GM12878 (cell line): ENCODE measurements at regions of chr11 and their contacts with region 1.

Region 1: DNA sequence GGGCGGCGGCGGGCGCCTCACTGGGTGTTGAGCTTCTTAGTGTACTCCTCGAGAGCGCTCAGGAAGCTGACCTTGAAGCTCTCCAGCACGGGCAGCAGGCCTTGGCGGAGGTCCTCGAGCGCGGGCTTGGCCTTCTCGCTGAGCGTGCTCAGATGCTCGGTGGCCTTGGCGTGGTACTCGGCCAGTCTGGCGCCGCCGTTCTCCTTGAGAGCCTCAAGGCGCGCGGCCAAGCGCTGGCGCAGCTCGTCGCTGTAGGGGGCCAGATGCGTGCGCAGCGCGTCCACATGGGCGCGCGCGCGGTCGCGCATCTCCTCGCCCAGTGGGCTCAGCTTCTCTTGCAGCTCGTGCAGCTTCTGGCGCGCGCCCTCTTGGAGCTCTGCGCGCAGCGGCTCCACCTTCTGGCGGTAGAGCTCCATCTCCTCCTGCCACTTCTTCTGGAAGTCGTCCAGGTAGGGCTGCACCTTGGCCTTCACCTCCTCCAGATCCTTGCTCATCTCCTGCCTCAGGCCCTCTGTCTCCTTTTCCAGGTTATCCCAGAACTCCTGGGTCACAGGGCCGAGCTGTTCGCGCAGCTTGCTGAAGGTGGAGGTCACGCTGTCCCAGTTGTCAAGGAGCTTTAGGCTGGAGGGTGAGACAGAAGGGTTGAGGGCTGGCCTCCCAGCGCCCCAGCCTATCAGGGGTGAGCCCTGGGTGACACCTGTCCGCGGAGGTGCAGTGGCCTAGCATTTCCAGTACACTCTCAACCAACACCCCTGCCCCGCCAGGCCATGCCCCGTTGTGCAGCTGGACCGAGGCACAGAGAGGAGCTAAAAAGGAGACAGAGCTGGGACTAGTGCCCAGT is 1.4 kb downstream of the APOA1 start:
- DNase-seq: peak; percentile 57
- ATAC-seq: peak; percentile 94
- H3K4me3 ChIP-seq: peak overlapping the region; percentile 52; the same call in 1 of the 2 replicates
- H3K27ac ChIP-seq: peak overlapping the region; percentile 20; the same call in 1 of the 2 replicates
- H3K4me1 ChIP-seq: peaks cover 8% of the 10 kb centered on the region; the same call in 1 of the 2 replicates
- H3K27me3 ChIP-seq: no peaks in the 10 kb centered on the region
- CTCF ChIP-seq: peak; percentile 68 to 81 (median 75)
- EP300 ChIP-seq: no peak
- POLR2A ChIP-seq: peak; percentile 83
- RAD21 ChIP-seq: peak; percentile 60

Region 2: DNA sequence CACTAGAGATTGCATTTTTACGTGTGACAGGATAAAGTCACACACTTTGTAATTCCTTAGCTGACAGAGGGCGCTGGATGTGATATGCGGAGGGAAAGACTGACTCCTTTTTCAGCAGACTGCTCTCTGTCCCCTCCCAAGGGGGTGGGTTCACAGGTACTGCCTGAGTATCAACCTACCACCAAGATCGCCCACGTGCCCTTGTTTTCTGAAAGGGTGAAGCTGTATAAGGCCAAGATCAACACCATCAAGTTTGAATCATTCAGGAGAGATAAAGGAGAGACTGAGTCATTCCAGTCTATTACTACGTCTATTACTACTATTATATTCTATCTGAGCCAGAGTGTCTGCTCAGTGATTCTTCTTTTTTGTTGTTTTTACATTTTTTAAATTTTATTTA is 93.9 kb before region 1 on chr11:
- CTCF ChIA-PET with region 1: interaction called, 14 read pairs
- POLR2A ChIA-PET with region 1: no interaction called
- RAD21 ChIA-PET with region 1: interaction called, 3 read pairs
- SMC1A ChIA-PET with region 1: no interaction called
- in situ Hi-C with region 1: no loop called
- intact Hi-C with region 1: no loop called
- DNase-seq: no peak
- ATAC-seq: no peak
- H3K4me3 ChIP-seq: no peak overlapping the region
- H3K27ac ChIP-seq: no peak overlapping the region
- H3K4me1 ChIP-seq: no peaks in the 10 kb centered on the region
- H3K27me3 ChIP-seq: no peaks in the 10 kb centered on the region
- CTCF ChIP-seq: no peak
- EP300 ChIP-seq: no peak
- POLR2A ChIP-seq: no peak
- RAD21 ChIP-seq: no peak

Region 3: DNA sequence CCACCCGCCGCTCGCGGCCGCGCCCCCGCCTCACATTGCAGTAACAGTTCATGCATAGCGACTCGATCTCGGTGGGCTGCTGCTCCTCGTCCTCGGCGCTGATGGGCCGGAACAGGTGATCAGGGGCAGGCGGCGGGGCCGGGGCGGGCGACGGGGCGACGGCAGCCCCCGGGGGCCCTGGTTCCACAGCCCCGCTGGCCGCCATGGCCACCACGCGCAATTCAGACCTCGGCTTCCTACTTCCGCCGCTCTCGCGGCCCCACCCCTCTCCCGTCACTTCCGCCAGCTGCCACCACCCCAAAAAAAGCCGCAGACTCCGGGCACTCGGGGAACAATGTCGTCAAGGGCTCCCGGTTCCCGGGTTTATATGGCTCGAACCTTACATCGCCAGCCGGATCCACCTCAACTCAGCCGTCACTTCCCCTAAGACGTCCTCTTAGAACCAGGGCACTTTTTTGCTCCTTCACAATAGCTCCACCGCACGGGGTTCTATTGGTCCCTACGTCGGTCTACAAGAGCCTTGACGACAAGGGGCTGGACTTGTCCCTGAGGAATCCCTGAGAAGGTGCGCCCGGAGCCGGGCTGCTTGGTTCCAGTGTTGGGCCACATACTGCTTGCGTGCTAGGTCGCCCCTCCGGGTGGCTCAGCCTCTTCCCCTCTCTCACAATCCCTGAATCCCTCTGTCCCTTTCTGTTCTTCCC is 48.1 kb before region 1 on chr11 and contains the start of gene ZPR1:
- CTCF ChIA-PET with region 1: interaction called, 183 read pairs
- POLR2A ChIA-PET with region 1: interaction called, 9 read pairs
- RAD21 ChIA-PET with region 1: interaction called, 56 read pairs
- SMC1A ChIA-PET with region 1: interaction called, 42 read pairs
- in situ Hi-C with region 1: no loop called
- intact Hi-C with region 1: loop called (anchors 1 kb)
- DNase-seq: no peak
- ATAC-seq: peak; percentile 86
- H3K4me3 ChIP-seq: peak within 1 kb of the TSS; percentile 96
- H3K27ac ChIP-seq: peak within 1 kb of the TSS; percentile 72
- H3K4me1 ChIP-seq: peaks cover 18% of the 10 kb centered on the region
- H3K27me3 ChIP-seq: no peaks in the 10 kb centered on the region
- CTCF ChIP-seq: no peak
- EP300 ChIP-seq: no peak
- POLR2A ChIP-seq: peak; percentile 96
- RAD21 ChIP-seq: no peak
- polyA plus RNA-seq, gene ZPR1: 9.3 to 20.4 TPM

Region 4: DNA sequence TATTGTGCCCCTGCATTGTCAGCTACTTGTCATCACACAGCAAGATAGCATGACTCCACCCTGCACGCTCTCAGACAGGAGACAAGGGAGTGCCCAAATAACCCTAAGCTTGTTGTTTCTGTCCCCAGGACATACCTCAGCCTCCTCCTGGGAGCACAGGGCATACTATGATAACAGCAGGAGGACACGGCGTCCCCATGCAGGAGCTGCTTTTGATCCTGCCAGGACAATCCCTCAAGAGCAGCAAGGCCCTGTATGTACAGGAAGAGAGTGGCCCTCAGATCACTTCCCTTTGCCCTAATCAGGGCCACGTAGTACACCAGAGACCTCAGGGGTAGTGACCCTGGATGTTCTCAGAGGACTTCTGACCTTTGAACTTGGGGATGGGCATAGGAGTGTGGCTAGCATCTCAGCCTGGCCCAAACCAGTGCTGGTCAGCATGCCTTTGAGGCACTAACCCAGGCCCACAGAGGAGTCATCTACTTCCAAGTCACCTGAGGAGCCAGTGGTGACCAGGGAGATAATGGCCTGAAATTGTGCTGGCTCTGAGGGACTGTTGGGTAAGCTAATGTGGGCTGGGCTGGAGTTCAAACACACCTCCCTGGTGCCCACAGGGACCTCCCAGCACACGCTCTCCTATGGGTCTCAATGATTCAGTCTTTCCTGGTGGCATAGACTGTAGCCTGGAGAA is 22.1 kb before region 1 on chr11:
- CTCF ChIA-PET with region 1: interaction called, 11 read pairs
- POLR2A ChIA-PET with region 1: no interaction called
- RAD21 ChIA-PET with region 1: interaction called, 5 read pairs
- SMC1A ChIA-PET with region 1: interaction called, 3 read pairs
- in situ Hi-C with region 1: no loop called
- intact Hi-C with region 1: no loop called
- DNase-seq: no peak
- ATAC-seq: no peak
- H3K4me3 ChIP-seq: no peak overlapping the region
- H3K27ac ChIP-seq: no peak overlapping the region
- H3K4me1 ChIP-seq: no peaks in the 10 kb centered on the region
- H3K27me3 ChIP-seq: no peaks in the 10 kb centered on the region
- CTCF ChIP-seq: no peak
- EP300 ChIP-seq: no peak
- POLR2A ChIP-seq: no peak
- RAD21 ChIP-seq: no peak

Region 5: DNA sequence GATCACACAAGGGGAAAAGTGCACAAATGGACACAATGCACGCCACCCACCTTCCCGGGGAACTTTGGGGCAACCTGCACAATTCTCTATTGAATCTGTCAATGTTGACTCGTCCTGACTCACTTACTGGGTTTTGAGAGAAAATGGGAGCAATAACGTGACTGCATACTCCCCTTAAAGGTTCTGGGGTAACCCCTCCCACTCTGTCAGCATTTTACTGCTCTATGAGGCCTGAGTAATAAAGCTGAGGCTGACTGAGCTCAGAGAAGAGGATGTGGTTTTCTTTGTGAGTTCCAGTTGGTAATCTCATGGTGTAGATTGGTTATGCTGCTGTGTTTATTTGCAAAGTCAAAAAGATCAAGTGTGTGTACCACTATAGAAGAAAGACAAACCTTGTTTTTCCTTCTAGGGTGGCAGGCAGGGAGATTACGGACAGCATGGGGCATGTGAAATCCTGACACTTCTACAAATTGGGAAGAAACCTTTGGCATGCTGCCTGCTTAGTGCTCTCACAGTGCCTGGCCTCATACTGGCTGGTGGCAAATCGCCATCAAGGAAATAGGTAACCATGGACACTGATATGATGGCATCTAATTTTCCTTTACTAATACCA is 17.6 kb after region 1 on chr11:
- CTCF ChIA-PET with region 1: interaction called, 24 read pairs
- POLR2A ChIA-PET with region 1: interaction called, 10 read pairs
- RAD21 ChIA-PET with region 1: interaction called, 32 read pairs
- SMC1A ChIA-PET with region 1: interaction called, 42 read pairs
- in situ Hi-C with region 1: no loop called
- intact Hi-C with region 1: no loop called
- DNase-seq: peak; percentile 90
- ATAC-seq: peak; percentile 98
- H3K4me3 ChIP-seq: peak overlapping the region; percentile 31; the same call in 1 of the 2 replicates
- H3K27ac ChIP-seq: peak overlapping the region; percentile 83
- H3K4me1 ChIP-seq: peaks cover 30% of the 10 kb centered on the region
- H3K27me3 ChIP-seq: no peaks in the 10 kb centered on the region
- CTCF ChIP-seq: no peak
- EP300 ChIP-seq: peak; percentile 79 to 84
- POLR2A ChIP-seq: no peak
- RAD21 ChIP-seq: no peak